MCF 10A (cell line): ENCODE measurements at regions of chr10 and their contacts with region 1.

Region 1: GRCh38 chr10:75226656-75227055 is 9.1 kb downstream of the COMTD1 start:
- DNase-seq: no peak
- H3K4me3 Mint-ChIP-seq: peak overlapping the region; percentile 56
- H3K27ac Mint-ChIP-seq: peak overlapping the region; percentile 75
- H3K4me1 Mint-ChIP-seq: peaks cover 56% of the 10 kb centered on the region
- H3K27me3 Mint-ChIP-seq: no peaks in the 10 kb centered on the region
- CTCF ChIP-seq: no peak

Region 2: DNA sequence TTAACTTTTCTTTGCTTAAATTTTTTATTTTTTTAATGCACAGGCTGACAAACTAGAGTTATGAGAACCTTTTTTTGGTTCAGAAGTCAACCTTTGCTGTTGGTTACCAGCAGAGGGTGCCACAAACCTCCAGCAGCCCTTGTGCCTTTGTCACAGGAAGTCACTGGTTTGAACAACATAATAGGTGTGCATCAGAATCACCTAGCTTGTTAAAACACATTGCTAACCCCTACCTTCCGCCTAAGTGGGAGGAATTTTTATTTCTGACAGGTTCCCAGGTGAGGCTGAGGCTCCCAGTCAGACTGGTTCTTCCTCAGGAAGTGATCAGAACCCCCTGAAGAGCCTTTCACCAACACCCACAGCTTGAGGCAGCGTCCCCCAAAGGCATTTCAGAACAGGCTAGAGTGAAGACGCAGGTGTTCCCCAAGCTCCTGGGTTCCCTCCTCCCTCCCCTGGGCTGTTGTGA is 38.7 kb before region 1 on chr10:
- CTCF ChIA-PET with region 1: interaction called, 209 read pairs
- POLR2A ChIA-PET with region 1: interaction called, 118 read pairs
- intact Hi-C with region 1: loop called (anchors 1 kb)
- DNase-seq: peak; percentile 78
- H3K4me3 Mint-ChIP-seq: no peak overlapping the region
- H3K27ac Mint-ChIP-seq: no peak overlapping the region
- H3K4me1 Mint-ChIP-seq: peaks cover 22% of the 10 kb centered on the region
- H3K27me3 Mint-ChIP-seq: no peaks in the 10 kb centered on the region
- CTCF ChIP-seq: peak; percentile 83

Region 3: DNA sequence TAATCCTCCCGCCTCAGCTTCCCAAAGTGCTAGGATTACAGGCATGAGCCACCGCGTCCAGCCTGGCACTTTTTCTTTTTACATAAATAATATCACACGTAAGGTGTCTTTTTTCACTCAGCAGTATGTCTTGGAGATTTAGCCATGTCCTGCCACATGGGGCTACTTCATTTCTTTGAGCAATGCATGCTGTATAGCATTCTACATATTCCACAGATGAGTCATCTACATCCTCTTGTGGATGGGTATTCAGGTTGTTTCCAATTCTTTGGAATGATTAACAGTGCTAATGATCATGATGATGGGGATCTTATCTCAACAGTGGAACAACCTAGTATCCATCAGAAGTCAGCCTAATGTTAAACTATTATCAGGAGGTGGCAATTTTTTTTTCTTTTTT is 124.1 kb after region 1 on chr10:
- CTCF ChIA-PET with region 1: no interaction called
- POLR2A ChIA-PET with region 1: no interaction called
- intact Hi-C with region 1: no loop called
- DNase-seq: peak; percentile 38
- H3K4me3 Mint-ChIP-seq: no peak overlapping the region
- H3K27ac Mint-ChIP-seq: no peak overlapping the region
- H3K4me1 Mint-ChIP-seq: peaks cover 6% of the 10 kb centered on the region
- H3K27me3 Mint-ChIP-seq: no peaks in the 10 kb centered on the region
- CTCF ChIP-seq: no peak